IMR-90 (cell line): ENCODE measurements at regions of chr3 and their contacts with region 1.

Region 1: DNA sequence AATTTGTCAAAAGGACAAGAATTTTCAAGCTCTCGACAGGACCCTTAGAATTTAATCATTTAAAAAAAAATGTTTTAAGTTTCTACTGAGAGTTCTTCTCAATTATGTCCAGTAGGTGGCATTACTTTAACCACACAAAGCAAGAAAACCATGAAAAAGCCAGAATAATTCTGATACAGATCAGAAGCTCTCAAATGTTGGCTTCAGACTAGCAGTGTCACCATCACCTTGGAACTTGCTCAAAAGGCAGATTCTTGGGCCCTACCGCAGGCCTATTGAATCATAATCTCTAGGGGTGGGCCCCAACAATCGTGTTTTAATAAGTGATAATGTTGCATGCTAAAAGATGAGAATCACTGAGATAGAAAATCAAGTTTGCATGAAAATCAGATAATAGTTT is 99.5 kb upstream of the KCNMB2 start:
- DNase-seq: peak; percentile 55
- ATAC-seq: peak; percentile 54
- H3K4me3 ChIP-seq: no peak overlapping the region
- H3K27ac ChIP-seq: no peak overlapping the region
- H3K4me1 ChIP-seq: no peaks in the 10 kb centered on the region
- H3K27me3 ChIP-seq: peaks cover 4% of the 10 kb centered on the region
- CTCF ChIP-seq: peak; percentile 67
- POLR2A ChIP-seq: no peak
- RAD21 ChIP-seq: peak; percentile 44; the same call in 1 of the 2 replicates

Region 2: DNA sequence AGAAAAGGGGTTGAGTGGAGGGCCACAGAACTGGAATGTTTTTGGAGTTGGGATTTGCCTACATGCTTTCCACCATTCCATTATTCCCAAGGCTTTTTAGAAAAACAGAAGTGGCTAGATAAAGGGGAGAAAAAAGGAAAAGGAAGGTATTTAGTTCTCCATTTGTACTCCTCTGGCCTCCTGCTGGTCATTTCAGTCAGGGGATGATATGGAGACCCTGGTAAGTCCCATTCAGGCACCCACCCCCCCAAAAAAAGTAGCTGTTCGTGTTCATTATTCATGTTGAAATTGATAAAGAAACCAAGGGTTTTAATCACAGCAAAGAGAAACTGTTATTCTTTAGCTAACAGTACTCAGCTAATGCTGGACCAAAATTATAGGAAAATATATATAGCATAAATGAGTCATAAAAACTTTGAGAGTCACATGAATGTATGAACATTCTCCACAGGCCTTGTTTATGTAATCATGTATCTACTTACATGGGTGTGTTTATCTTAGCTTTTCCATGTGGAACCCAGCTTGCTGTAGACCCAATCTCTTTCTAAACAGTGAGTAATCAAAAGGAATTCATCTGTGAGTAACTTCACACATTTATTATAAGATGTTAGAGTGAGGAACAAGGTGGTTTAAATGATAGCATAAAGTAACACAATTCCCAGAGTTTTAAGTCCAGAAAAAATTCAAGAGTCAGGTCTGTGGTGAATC is 266.6 kb after region 1 on chr3:
- CTCF ChIA-PET with region 1: interaction called, 3 read pairs
- POLR2A ChIA-PET with region 1: no interaction called
- dilution Hi-C with region 1: no loop called
- in situ Hi-C with region 1: no loop called
- intact Hi-C with region 1: loop called (anchors 10 kb)
- DNase-seq: peak; percentile 97
- ATAC-seq: peak; percentile 83
- H3K4me3 ChIP-seq: 0 out of 2 replicates have a peak overlapping the region, but pooled peaks have one; percentile 18
- H3K27ac ChIP-seq: peak overlapping the region; percentile 98; the same call in 1 of the 2 replicates
- H3K4me1 ChIP-seq: peaks cover 24% of the 10 kb centered on the region
- H3K27me3 ChIP-seq: no peaks in the 10 kb centered on the region
- CTCF ChIP-seq: peak; percentile 24
- POLR2A ChIP-seq: no peak
- RAD21 ChIP-seq: no peak

Region 3: GRCh38 chr3:178718995-178719635 is 282.3 kb after region 1 on chr3:
- CTCF ChIA-PET with region 1: no interaction called
- POLR2A ChIA-PET with region 1: no interaction called
- dilution Hi-C with region 1: no loop called
- in situ Hi-C with region 1: no loop called
- intact Hi-C with region 1: no loop called
- DNase-seq: no peak
- ATAC-seq: no peak
- H3K4me3 ChIP-seq: no peak overlapping the region
- H3K27ac ChIP-seq: no peak overlapping the region
- H3K4me1 ChIP-seq: peaks cover 4% of the 10 kb centered on the region; the same call in 1 of the 2 replicates
- H3K27me3 ChIP-seq: no peaks in the 10 kb centered on the region
- CTCF ChIP-seq: no peak
- POLR2A ChIP-seq: no peak
- RAD21 ChIP-seq: no peak

Region 4: DNA sequence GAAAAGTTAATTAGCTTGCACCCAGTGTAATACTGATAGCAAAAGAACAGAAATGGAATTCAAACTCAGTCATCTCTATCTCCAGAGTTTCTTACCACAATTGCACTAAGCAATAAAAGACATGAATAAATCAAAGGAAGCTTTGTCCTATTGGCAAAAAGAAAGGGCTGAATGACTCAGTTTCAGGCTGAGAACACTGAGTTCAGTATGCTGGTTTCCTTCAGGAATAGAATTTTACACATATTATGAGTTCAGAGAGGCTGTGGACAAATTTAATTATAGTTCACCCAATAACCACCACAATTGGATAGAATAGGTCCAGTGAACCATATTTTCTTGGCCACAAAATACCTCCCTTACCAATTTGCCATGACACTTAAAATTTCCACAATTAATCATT is 349.2 kb after region 1 on chr3:
- CTCF ChIA-PET with region 1: no interaction called
- POLR2A ChIA-PET with region 1: no interaction called
- dilution Hi-C with region 1: no loop called
- in situ Hi-C with region 1: no loop called
- intact Hi-C with region 1: no loop called
- DNase-seq: no peak
- ATAC-seq: no peak
- H3K4me3 ChIP-seq: no peak overlapping the region
- H3K27ac ChIP-seq: no peak overlapping the region
- H3K4me1 ChIP-seq: no peaks in the 10 kb centered on the region
- H3K27me3 ChIP-seq: no peaks in the 10 kb centered on the region
- CTCF ChIP-seq: no peak
- POLR2A ChIP-seq: no peak
- RAD21 ChIP-seq: no peak

Region 5: GRCh38 chr3:178947738-178948137 is 511.0 kb after region 1 on chr3:
- CTCF ChIA-PET with region 1: interaction called, 3 read pairs
- POLR2A ChIA-PET with region 1: no interaction called
- dilution Hi-C with region 1: no loop called
- in situ Hi-C with region 1: loop called (anchors 10 kb)
- intact Hi-C with region 1: loop called (anchors 5 kb)
- DNase-seq: no peak
- ATAC-seq: no peak
- H3K4me3 ChIP-seq: no peak overlapping the region
- H3K27ac ChIP-seq: no peak overlapping the region
- H3K4me1 ChIP-seq: no peaks in the 10 kb centered on the region
- H3K27me3 ChIP-seq: no peaks in the 10 kb centered on the region
- CTCF ChIP-seq: 0 out of 2 replicates have a peak, but pooled peaks have one; percentile 16
- POLR2A ChIP-seq: no peak
- RAD21 ChIP-seq: no peak

Region 6: DNA sequence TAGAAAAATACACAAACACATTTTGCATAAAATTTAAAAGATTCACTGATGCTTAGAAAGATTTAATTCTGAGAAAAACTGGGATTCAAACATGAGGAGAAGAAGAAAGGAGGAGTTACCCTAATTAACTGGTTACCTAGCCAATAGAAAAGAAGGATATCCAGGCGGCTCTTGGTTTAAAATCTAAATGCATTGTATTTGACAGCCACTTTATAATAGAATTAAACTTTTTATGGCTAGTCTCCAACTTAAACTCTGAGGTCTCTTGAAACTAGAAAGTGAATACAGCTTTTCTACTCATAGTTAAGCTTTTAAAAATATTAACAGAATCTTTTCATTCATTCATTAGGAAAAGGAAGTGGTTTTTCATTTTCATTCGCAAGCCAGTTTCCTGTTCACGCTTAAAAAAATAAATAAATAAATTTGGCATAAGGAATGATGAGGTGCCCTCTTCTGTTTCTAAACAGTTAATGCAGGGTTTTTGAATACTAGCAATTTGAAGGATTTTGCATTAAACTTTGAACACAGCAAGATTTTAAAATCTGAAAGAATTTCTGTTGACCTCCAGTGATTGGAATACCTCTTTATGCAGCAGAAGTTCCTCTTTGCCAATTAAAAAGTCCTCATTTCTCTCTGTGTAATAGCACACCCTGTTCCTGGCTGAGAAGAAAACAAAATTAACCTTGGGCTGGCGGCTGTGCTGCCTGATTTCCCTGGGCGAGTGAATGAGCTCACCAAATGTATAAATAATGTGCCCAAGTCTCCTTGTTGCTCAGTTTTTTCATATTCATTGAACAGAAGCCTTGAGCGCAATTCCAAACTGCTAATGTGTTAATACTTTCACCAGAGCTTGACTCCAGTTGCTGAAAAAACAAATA is 529.8 kb after region 1 on chr3:
- CTCF ChIA-PET with region 1: interaction called, 18 read pairs
- POLR2A ChIA-PET with region 1: no interaction called
- dilution Hi-C with region 1: no loop called
- in situ Hi-C with region 1: no loop called
- intact Hi-C with region 1: loop called (anchors 1 kb)
- DNase-seq: peak; percentile 37
- ATAC-seq: peak; percentile 66
- H3K4me3 ChIP-seq: no peak overlapping the region
- H3K27ac ChIP-seq: no peak overlapping the region
- H3K4me1 ChIP-seq: no peaks in the 10 kb centered on the region
- H3K27me3 ChIP-seq: peaks cover 2% of the 10 kb centered on the region; the same call in 1 of the 2 replicates
- CTCF ChIP-seq: peak; percentile 75
- POLR2A ChIP-seq: no peak
- RAD21 ChIP-seq: peak; percentile 72

Region 7: DNA sequence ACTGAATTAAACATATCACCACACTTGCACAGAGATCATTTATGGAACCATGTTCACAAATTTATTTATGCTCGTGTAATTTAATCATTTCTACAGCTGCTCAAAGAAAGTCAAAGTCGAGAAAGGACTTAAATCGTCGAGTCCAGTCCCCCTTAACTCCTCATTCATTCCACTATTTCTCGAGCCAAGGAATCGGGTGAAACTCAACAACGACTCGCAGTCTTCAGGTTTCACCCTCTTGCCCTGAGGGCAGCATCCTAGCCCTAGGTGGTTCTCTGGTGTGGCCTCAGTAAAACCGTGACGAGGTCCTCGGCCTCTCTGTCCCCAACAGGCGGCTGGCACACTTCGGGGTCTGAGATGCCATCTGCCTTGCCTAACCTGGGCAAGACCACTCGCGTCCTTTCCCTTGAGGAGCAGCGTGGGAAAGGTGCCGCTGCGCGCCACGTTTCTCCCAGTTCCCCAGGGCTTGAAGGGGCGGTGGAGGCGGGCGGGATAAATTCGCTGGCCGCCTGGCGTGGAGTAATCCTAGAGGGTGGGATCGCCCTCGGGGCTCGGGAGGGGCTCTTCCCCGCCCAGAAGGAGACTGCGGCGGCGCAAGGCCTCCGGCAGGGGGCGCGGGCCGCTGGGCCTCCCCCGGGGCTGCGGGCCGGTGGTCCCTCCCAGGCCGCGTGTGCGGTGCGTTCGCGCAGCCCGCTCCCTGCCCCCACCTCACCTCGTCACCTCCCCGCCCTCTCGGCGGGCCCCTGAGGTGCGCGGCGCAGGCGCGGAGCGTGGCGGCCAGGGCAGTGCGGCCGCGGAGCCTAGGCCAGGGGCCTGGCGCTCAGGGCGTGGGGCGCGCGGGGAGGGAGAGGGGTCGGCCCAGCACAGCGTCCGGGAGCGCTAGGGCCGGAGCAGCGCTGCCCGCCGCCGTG is 885.8 kb after region 1 on chr3 and contains the start of gene ZNF639:
- CTCF ChIA-PET with region 1: interaction called, 5 read pairs
- POLR2A ChIA-PET with region 1: no interaction called
- dilution Hi-C with region 1: no loop called
- in situ Hi-C with region 1: loop called (anchors 10 kb)
- intact Hi-C with region 1: loop called (anchors 2 kb)
- DNase-seq: peak; percentile 82
- ATAC-seq: peak; percentile 90
- H3K4me3 ChIP-seq: peak within 1 kb of the TSS; percentile 97
- H3K27ac ChIP-seq: peak within 1 kb of the TSS; percentile 94
- H3K4me1 ChIP-seq: peaks cover 3% of the 10 kb centered on the region; the same call in 1 of the 2 replicates
- H3K27me3 ChIP-seq: no peaks in the 10 kb centered on the region
- CTCF ChIP-seq: peak; percentile 90
- POLR2A ChIP-seq: peak; percentile 77
- RAD21 ChIP-seq: peak; percentile 38; the same call in 1 of the 2 replicates
- total RNA-seq, gene ZNF639: 50.5 and 57.8 TPM in 2 replicates